T-cell (primary cell): ENCODE measurements at regions of chr2 and their contacts with region 1.

Region 1: GRCh38 chr2:196171248-196171871 is at the start of gene STK17B:
- DNase-seq: peak; percentile 90 to 98 (median 97)
- ATAC-seq: peak; percentile 67 to 75 (median 70)
- H3K4me3 ChIP-seq: peak within 1 kb of the TSS; percentile 86 to 99
- H3K4me3 Mint-ChIP-seq: peak within 1 kb of the TSS; percentile 88 to 99 (median 98)
- H3K27ac ChIP-seq: peak within 1 kb of the TSS; percentile 93
- H3K27ac Mint-ChIP-seq: peak within 1 kb of the TSS; percentile 92 to 96
- H3K4me1 ChIP-seq: peaks cover 36 to 37% of the 10 kb centered on the region in 2 experiments
- H3K4me1 Mint-ChIP-seq: peaks cover 39 to 46% (median 41%) of the 10 kb centered on the region in 3 donors
- H3K27me3 ChIP-seq: no peaks in the 10 kb centered on the region
- H3K27me3 Mint-ChIP-seq: no peaks in the 10 kb centered on the region
- total RNA-seq, gene STK17B: 218 to 478 (median 248) TPM

Region 2: DNA sequence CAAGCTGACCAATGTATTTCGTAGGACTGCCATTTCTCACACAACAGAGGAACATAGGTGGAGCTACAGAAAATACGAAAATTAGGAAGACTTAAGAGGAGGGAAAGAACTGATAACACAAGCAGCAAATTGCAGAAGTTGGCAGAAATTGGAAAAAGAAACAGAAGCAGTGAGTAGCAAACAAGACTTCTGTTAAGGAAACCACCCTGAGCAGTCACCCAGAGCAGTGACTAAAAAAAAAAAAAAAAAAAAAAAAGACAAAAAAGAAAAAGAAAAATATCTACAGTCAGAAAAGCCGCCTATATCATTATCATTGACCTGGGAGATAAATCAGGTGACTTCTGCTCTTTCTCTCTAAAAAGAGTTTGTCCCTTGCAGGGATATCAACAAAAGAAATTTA is 21.4 kb before region 1 on chr2:
- CTCF ChIA-PET with region 1: no interaction called
- POLR2A ChIA-PET with region 1: interaction called, 14 to 29 read pairs
- DNase-seq: peak in 1 of 35 experiments; percentile 55
- ATAC-seq: peak in 1 of 4 experiments; percentile 16
- H3K4me3 ChIP-seq: no peak overlapping the region
- H3K4me3 Mint-ChIP-seq: peak overlapping the region; percentile 58 to 99 (median 67)
- H3K27ac ChIP-seq: peak overlapping the region; percentile 43
- H3K27ac Mint-ChIP-seq: peak overlapping the region; percentile 88 to 96
- H3K4me1 ChIP-seq: peaks cover 44 to 67% of the 10 kb centered on the region in 2 experiments
- H3K4me1 Mint-ChIP-seq: peaks cover 90 to 98% (median 94%) of the 10 kb centered on the region in 3 donors
- H3K27me3 ChIP-seq: no peaks in the 10 kb centered on the region
- H3K27me3 Mint-ChIP-seq: no peaks in the 10 kb centered on the region

Region 3: DNA sequence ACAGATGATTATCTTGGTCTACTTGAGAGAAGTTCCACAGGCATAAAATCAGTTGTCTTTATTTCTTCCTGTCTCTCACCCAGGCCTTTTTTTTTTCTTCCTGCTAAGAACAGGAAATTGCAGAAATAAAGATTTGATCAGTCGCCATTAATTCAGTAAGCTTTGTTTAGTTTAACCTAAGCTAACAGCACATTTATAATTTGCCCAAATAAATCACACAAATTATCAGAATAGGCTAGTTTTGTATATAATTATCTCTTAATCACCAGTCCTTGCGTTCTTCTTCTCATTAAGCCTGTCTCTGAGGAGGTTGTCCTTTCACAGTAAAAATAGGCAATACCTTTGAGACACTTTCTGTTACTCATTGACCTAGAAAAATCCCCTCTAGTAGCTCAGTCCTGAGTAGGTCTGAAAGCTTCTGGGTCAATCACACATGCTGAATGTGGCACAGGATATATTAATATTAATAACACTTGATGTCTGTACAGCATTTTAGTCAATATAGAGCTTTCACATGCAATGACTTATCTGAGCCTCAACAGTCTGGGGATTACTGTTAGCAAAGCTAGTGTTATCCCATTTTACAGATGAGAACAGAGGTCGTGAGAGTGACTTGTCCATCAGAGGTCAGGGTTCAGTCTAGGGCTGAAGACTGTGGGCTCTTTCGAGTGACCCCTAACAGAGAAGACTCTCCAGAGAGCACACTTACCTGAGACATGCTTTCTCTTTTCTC is 11.2 kb after region 1 on chr2:
- CTCF ChIA-PET with region 1: interaction called in 1 of 2 experiments, 6 read pairs
- POLR2A ChIA-PET with region 1: interaction called, 6 to 32 read pairs
- DNase-seq: peak in 1 of 35 experiments; percentile 63
- ATAC-seq: peak in 3 of 4 experiments; percentile 21 to 33 (median 30)
- H3K4me3 ChIP-seq: no peak overlapping the region
- H3K4me3 Mint-ChIP-seq: peak overlapping the region; percentile 14 to 75 (median 64)
- H3K27ac ChIP-seq: peak overlapping the region; percentile 94
- H3K27ac Mint-ChIP-seq: peak overlapping the region; percentile 93 to 100
- H3K4me1 ChIP-seq: peaks cover 65 to 66% of the 10 kb centered on the region in 2 experiments
- H3K4me1 Mint-ChIP-seq: peaks cover 86 to 91% (median 88%) of the 10 kb centered on the region in 3 donors
- H3K27me3 ChIP-seq: no peaks in the 10 kb centered on the region
- H3K27me3 Mint-ChIP-seq: no peaks in the 10 kb centered on the region

Region 4: DNA sequence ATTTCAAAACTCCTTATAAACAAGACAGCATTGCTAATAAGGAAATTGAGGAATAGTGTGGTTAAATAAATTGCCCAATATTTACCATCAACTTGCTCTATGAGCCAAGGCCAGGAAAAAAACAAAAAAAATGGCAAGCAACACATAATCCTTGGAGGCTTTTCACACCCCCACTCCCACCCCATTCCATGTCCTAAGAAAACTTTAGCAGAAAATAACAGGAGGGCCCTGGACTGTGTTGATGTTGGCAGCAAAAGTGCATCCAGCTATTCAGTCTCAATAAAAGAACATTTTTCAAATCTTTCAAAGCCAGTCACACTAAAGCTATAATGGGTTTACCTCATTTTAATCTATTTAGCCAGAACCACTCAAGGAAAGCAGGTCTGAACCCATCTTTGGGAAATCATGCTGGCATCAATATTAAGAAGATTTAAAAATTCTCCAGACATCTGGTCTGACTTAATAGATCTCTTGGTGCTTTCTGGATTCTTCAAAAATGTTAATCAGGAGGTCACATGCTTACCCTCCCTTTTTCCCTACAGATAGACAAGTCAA is 34.6 kb after region 1 on chr2:
- CTCF ChIA-PET with region 1: interaction called in 1 of 2 experiments, 23 read pairs
- POLR2A ChIA-PET with region 1: interaction called, 6 to 20 read pairs
- DNase-seq: no peak
- ATAC-seq: no peak
- H3K4me3 ChIP-seq: no peak overlapping the region
- H3K4me3 Mint-ChIP-seq: no peak overlapping the region
- H3K27ac ChIP-seq: no peak overlapping the region
- H3K27ac Mint-ChIP-seq: peak overlapping the region in 1 of 2 donors; percentile 36
- H3K4me1 ChIP-seq: peaks cover 27% of the 10 kb centered on the region in 2 experiments
- H3K4me1 Mint-ChIP-seq: peaks cover 50 to 66% (median 61%) of the 10 kb centered on the region in 3 donors
- H3K27me3 ChIP-seq: no peaks in the 10 kb centered on the region
- H3K27me3 Mint-ChIP-seq: no peaks in the 10 kb centered on the region

Region 5: DNA sequence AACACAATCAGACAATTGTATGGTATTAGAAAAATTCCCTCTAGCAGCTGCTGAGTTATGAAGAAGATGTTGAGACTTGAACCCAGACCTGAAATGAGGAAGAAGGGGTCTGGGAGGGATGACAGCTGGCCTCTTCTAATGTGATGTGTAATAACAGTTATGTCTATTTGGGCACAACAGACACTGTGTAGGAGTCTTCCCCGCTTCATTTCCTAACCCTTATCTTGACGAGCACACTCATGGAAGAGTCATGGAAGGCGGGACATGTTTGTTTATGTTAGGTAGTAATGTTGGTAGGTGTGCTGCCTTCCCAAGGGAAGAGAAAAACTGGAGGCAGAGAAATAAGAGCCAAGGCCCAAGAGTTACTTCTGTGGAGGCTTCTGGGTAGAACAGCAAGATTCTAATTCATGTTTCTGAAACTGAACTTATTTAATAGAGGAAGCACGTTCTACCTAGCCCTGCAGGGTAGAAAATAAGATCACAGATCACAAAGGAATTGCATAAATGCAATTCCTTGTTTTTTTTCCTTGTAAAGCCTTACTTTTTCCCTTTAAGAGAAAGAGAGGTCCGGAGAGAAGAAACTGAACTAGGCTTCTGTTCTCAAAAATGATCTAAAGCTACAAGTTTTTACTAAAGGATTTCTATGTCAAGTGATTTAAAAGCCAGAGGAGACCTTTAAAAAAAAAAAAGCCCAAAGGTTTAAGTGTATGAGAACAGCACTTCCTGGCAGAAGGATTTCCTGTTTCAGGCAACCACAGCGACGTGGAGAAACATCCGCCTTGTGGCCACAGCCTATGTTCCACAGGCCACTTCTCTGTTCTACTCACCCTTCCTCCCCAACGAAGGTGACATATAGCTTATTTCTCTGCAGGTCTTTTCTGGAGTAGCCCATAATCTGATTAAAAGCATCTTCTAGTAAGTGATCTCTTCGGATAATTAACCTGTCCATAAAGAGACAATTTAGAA is 68.5 kb after region 1 on chr2:
- CTCF ChIA-PET with region 1: interaction called in 1 of 2 experiments, 3 read pairs
- POLR2A ChIA-PET with region 1: interaction called, 5 to 14 read pairs
- DNase-seq: peak; percentile 41 to 90 (median 80)
- ATAC-seq: peak; percentile 86 to 94 (median 90)
- H3K4me3 ChIP-seq: peak overlapping the region; percentile 8 to 16
- H3K4me3 Mint-ChIP-seq: peak overlapping the region; percentile 67 to 75 (median 73)
- H3K27ac ChIP-seq: peak overlapping the region; percentile 85
- H3K27ac Mint-ChIP-seq: peak overlapping the region; percentile 95 to 98
- H3K4me1 ChIP-seq: peaks cover 57 to 63% of the 10 kb centered on the region in 2 experiments
- H3K4me1 Mint-ChIP-seq: peaks cover 82 to 88% (median 87%) of the 10 kb centered on the region in 3 donors
- H3K27me3 ChIP-seq: no peaks in the 10 kb centered on the region
- H3K27me3 Mint-ChIP-seq: no peaks in the 10 kb centered on the region